ENCODE measurements at regions of chr9 and their contacts with region 1.

Region 1: GRCh38 chr9:83544002-83544698 is 5.9 kb upstream of the FRMD3 start:
- DNase-seq: no peak
- H3K4me3 ChIP-seq: no peak overlapping the region
- H3K27ac ChIP-seq: no peak overlapping the region
- H3K27me3 ChIP-seq: no peaks in the 10 kb centered on the region
- CTCF ChIP-seq: peak in 54 of 56 donors; percentile 34 to 78 (median 53)

Region 2: GRCh38 chr9:83219152-83219923 is 324.8 kb before region 1 on chr9:
- intact Hi-C with region 1: loop called in 1 of 2 experiments (anchors 5 kb)
- DNase-seq: peak; percentile 46 to 89 (median 74)
- H3K4me3 ChIP-seq: peak overlapping the region; percentile 49 to 85 (median 66)
- H3K27ac ChIP-seq: peak overlapping the region in 23 of 59 donors; percentile 7 to 76 (median 45)
- H3K27me3 ChIP-seq: no peaks in the 10 kb centered on the region
- CTCF ChIP-seq: peak in 51 of 56 donors; percentile 7 to 82 (median 60)

Region 3: DNA sequence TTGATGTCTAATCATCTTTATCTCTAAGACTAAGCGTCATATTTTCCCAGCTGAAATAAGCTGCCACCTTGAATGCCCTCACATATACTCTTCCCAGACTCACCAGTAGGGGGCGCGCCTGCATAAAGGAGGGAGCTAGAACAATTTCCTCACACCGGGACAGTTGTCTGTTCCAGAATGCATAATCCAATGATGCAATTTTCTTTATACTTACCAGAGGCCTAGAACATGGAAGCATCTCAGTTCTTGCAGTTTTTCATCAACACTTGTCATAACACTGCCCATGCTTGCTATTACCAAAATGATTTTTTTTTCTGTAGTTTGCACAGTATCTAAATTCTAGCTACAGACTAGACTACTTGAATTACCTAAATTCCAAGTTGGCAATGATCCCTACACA is 209.8 kb before region 1 on chr9:
- intact Hi-C with region 1: loop called in 1 of 2 experiments (anchors 5 kb)
- DNase-seq: peak in 9 of 10 donors; percentile 51 to 82 (median 71)
- H3K4me3 ChIP-seq: no peak overlapping the region
- H3K27ac ChIP-seq: no peak overlapping the region
- H3K27me3 ChIP-seq: no peaks in the 10 kb centered on the region
- CTCF ChIP-seq: peak; percentile 75 to 99 (median 91)

Region 4: GRCh38 chr9:83560169-83560826 is 16.1 kb after region 1 on chr9:
- intact Hi-C with region 1: loop called in 1 of 2 experiments (anchors 2 kb)
- DNase-seq: no peak
- H3K4me3 ChIP-seq: no peak overlapping the region
- H3K27ac ChIP-seq: no peak overlapping the region
- H3K27me3 ChIP-seq: no peaks in the 10 kb centered on the region
- CTCF ChIP-seq: no peak

Measured in dorsolateral prefrontal cortex (tissue), 120 donors.